ENCODE measurements at regions of chr7 and their contacts with region 1.

Region 1: GRCh38 chr7:25663877-25664276 is 435.6 kb upstream of the NPVF start:
- DNase-seq: no peak
- ATAC-seq: no peak
- H3K4me3 ChIP-seq: no peak overlapping the region
- H3K27ac ChIP-seq: no peak overlapping the region
- H3K4me1 ChIP-seq: peaks cover 0 to 5% of the 10 kb centered on the region in 2 donors
- H3K27me3 ChIP-seq: no peaks in the 10 kb centered on the region

Region 2: GRCh38 chr7:25619963-25620799 is 43.7 kb before region 1 on chr7:
- intact Hi-C with region 1: loop called in 1 of 2 experiments (anchors 5 kb)
- DNase-seq: no peak
- ATAC-seq: no peak
- H3K4me3 ChIP-seq: no peak overlapping the region
- H3K27ac ChIP-seq: peak overlapping the region in 1 of 2 donors; percentile 32
- H3K4me1 ChIP-seq: peaks cover 11 to 24% of the 10 kb centered on the region in 2 donors
- H3K27me3 ChIP-seq: no peaks in the 10 kb centered on the region

Region 3: GRCh38 chr7:26490650-26491624 is 827.1 kb after region 1 on chr7:
- intact Hi-C with region 1: no loop called
- DNase-seq: no peak
- ATAC-seq: no peak
- H3K4me3 ChIP-seq: no peak overlapping the region
- H3K27ac ChIP-seq: no peak overlapping the region
- H3K4me1 ChIP-seq: no peaks in the 10 kb centered on the region
- H3K27me3 ChIP-seq: no peaks in the 10 kb centered on the region

Measured in aorta (tissue), 5 donors.